Dorsolateral prefrontal cortex (tissue), 120 donors: ENCODE measurements at regions of chr20 and their contacts with region 1.

Region 1: GRCh38 chr20:10848810-10849370 is 175.1 kb upstream of the JAG1 start:
- DNase-seq: no peak
- H3K4me3 ChIP-seq: no peak overlapping the region
- H3K27ac ChIP-seq: no peak overlapping the region
- H3K27me3 ChIP-seq: peaks cover 0 to 3% (median 0%) of the 10 kb centered on the region in 45 donors
- CTCF ChIP-seq: no peak

Region 2: DNA sequence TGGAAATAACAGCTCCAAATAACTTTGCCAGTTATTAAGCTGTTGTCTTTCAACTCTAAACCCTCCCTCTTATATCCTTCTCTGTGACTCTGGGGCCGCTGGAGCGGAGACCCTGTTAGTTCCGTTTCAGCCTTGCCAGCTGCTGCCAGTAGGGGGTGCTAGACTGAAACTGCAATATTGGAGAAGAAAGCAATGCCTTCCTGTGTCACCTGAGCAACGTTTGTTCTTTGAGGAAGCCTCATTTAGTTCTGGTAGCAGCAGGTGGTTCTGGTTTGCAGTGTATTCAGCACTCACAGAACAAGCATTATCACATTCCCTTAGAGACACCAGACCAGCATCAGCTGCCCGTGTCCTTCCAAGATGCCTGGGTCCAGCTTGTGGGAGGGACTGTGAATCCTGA is 152.2 kb before region 1 on chr20:
- intact Hi-C with region 1: loop called in 1 of 2 experiments (anchors 10 kb)
- DNase-seq: no peak
- H3K4me3 ChIP-seq: no peak overlapping the region
- H3K27ac ChIP-seq: no peak overlapping the region
- H3K27me3 ChIP-seq: no peaks in the 10 kb centered on the region
- CTCF ChIP-seq: peak in 50 of 56 donors; percentile 9 to 54 (median 39)